ENCODE measurements at regions of chr12 and their contacts with region 1.

Region 1: GRCh38 chr12:93441617-93442410 is at the start of gene UBE2N:
- DNase-seq: peak; percentile 70
- ATAC-seq: peak; percentile 87
- H3K4me3 ChIP-seq: peak within 1 kb of the TSS; percentile 83
- H3K27ac ChIP-seq: peak within 1 kb of the TSS; percentile 73
- H3K4me1 ChIP-seq: peaks cover 9% of the 10 kb centered on the region
- H3K27me3 ChIP-seq: no peaks in the 10 kb centered on the region
- CTCF ChIP-seq: no peak
- EP300 ChIP-seq: no peak
- POLR2A ChIP-seq: peak; percentile 96
- RAD21 ChIP-seq: no peak
- polyA plus RNA-seq, gene UBE2N: 699 to 945 TPM

Region 2: GRCh38 chr12:93397412-93397811 is 44.4 kb before region 1 on chr12:
- CTCF ChIA-PET with region 1: interaction called, 6 read pairs
- POLR2A ChIA-PET with region 1: interaction called, 12 read pairs
- RAD21 ChIA-PET with region 1: interaction called, 3 read pairs
- SMC1A ChIA-PET with region 1: no interaction called
- in situ Hi-C with region 1: no loop called
- intact Hi-C with region 1: no loop called
- DNase-seq: no peak
- ATAC-seq: no peak
- H3K4me3 ChIP-seq: no peak overlapping the region
- H3K27ac ChIP-seq: no peak overlapping the region
- H3K4me1 ChIP-seq: no peaks in the 10 kb centered on the region; the same call in 1 of the 2 replicates
- H3K27me3 ChIP-seq: no peaks in the 10 kb centered on the region
- CTCF ChIP-seq: no peak
- EP300 ChIP-seq: no peak
- POLR2A ChIP-seq: no peak
- RAD21 ChIP-seq: no peak

Region 3: GRCh38 chr12:93427779-93428563 is 13.8 kb before region 1 on chr12:
- CTCF ChIA-PET with region 1: interaction called, 163 read pairs
- POLR2A ChIA-PET with region 1: interaction called, 65 read pairs
- RAD21 ChIA-PET with region 1: interaction called, 145 read pairs
- SMC1A ChIA-PET with region 1: interaction called, 76 read pairs
- in situ Hi-C with region 1: no loop called
- intact Hi-C with region 1: no loop called
- DNase-seq: no peak
- ATAC-seq: no peak
- H3K4me3 ChIP-seq: no peak overlapping the region
- H3K27ac ChIP-seq: no peak overlapping the region
- H3K4me1 ChIP-seq: peaks cover 72% of the 10 kb centered on the region
- H3K27me3 ChIP-seq: no peaks in the 10 kb centered on the region
- CTCF ChIP-seq: no peak
- EP300 ChIP-seq: no peak
- POLR2A ChIP-seq: no peak
- RAD21 ChIP-seq: no peak

Region 4: GRCh38 chr12:93467351-93468007 is 25.7 kb after region 1 on chr12 and contains the start of gene MRPL42:
- CTCF ChIA-PET with region 1: interaction called, 12 read pairs
- POLR2A ChIA-PET with region 1: interaction called, 5 read pairs
- RAD21 ChIA-PET with region 1: interaction called, 15 read pairs
- SMC1A ChIA-PET with region 1: interaction called, 16 read pairs
- in situ Hi-C with region 1: no loop called
- intact Hi-C with region 1: loop called (anchors 1 kb)
- DNase-seq: peak; percentile 73
- ATAC-seq: peak; percentile 92
- H3K4me3 ChIP-seq: peak within 1 kb of the TSS; percentile 93
- H3K27ac ChIP-seq: peak within 1 kb of the TSS; percentile 91
- H3K4me1 ChIP-seq: peaks cover 3% of the 10 kb centered on the region; the same call in 1 of the 2 replicates
- H3K27me3 ChIP-seq: no peaks in the 10 kb centered on the region
- CTCF ChIP-seq: peak; percentile 64 to 84 (median 78)
- EP300 ChIP-seq: no peak
- POLR2A ChIP-seq: peak; percentile 93
- RAD21 ChIP-seq: peak; percentile 50; the same call in 1 of the 2 replicates
- polyA plus RNA-seq, gene MRPL42: 281 to 427 TPM